Left ventricle myocardium superior (tissue), 1 donor: ENCODE measurements at regions of chr15 and their contacts with region 1.

Region 1: GRCh38 chr15:79184465-79184892 is 93.9 kb upstream of the RASGRF1 start:
- DNase-seq: peak; percentile 82
- ATAC-seq: peak; percentile 59

Region 2: GRCh38 chr15:78909791-78910228 is 274.7 kb before region 1 on chr15:
- intact Hi-C with region 1: loop called (anchors 5 kb)
- DNase-seq: no peak
- ATAC-seq: peak; percentile 39

Region 3: GRCh38 chr15:79028411-79028964 is 156.0 kb before region 1 on chr15:
- intact Hi-C with region 1: loop called (anchors 2 kb)
- DNase-seq: no peak
- ATAC-seq: peak; percentile 37